ENCODE measurements at regions of chr14 and their contacts with region 1.

Region 1: DNA sequence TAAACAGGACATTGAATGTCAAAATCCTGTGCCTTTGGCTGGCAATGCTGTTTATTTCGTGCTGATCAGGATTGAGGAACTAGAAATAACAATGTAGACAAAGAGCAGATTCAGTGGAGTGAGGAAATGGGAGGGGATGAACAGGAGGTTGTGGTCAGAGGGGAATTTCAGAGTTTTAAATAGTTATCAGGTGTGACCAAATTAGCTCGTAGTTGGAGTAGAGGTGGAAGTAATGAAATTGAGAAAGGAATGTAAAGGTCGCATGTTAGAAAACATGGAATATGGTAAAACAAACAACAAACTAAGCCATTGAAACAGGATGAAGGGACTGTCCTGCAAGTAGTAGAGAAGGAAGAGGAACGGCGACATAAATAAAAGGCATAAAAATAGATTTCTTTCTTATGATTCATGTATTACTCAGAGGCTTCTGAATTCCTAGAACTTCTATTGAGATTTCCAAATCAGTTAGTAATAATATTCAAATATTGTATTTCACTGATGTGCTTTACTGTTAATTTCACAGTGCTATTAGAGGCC is 9.5 kb upstream of the SAV1 start:
- DNase-seq: peak in 1 of 9 experiments; percentile 17
- ATAC-seq: no peak
- H3K4me3 ChIP-seq: no peak overlapping the region
- H3K4me3 Mint-ChIP-seq: no peak overlapping the region
- H3K27ac ChIP-seq: no peak overlapping the region
- H3K27ac Mint-ChIP-seq: no peak overlapping the region
- H3K4me1 ChIP-seq: no peaks in the 10 kb centered on the region
- H3K4me1 Mint-ChIP-seq: peaks cover 4% of the 10 kb centered on the region
- H3K27me3 ChIP-seq: no peaks in the 10 kb centered on the region
- H3K27me3 Mint-ChIP-seq: no peaks in the 10 kb centered on the region
- CTCF ChIP-seq: no peak

Region 2: DNA sequence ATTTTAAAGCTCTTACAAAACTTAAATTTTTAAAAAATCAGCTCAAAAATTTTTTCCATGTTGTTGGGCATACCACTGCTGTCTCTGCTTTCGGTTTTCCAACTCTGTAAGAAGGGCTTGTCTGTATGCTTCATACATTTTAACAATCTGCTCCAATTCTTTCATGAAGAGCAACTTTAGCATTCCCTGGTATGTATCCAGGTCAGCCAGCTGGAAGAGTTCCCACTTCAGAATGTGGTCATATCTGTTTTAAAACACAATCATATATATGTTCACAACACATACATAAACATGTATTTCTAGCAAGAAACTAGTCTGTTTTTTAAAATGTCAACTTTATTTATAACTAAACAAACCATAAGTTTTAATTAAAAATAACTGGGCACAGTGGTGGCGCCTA is 42.5 kb before region 1 on chr14:
- CTCF ChIA-PET with region 1: no interaction called
- POLR2A ChIA-PET with region 1: no interaction called
- intact Hi-C with region 1: no loop called
- DNase-seq: no peak
- ATAC-seq: no peak
- H3K4me3 ChIP-seq: no peak overlapping the region
- H3K4me3 Mint-ChIP-seq: no peak overlapping the region
- H3K27ac ChIP-seq: no peak overlapping the region
- H3K27ac Mint-ChIP-seq: no peak overlapping the region
- H3K4me1 ChIP-seq: no peaks in the 10 kb centered on the region
- H3K4me1 Mint-ChIP-seq: no peaks in the 10 kb centered on the region
- H3K27me3 ChIP-seq: no peaks in the 10 kb centered on the region
- H3K27me3 Mint-ChIP-seq: no peaks in the 10 kb centered on the region
- CTCF ChIP-seq: no peak

Region 3: GRCh38 chr14:50657753-50658152 is 19.8 kb before region 1 on chr14:
- CTCF ChIA-PET with region 1: no interaction called
- POLR2A ChIA-PET with region 1: interaction called, 4 read pairs
- intact Hi-C with region 1: loop called in 1 of 2 experiments (anchors 2 kb)
- DNase-seq: no peak
- ATAC-seq: no peak
- H3K4me3 ChIP-seq: no peak overlapping the region
- H3K4me3 Mint-ChIP-seq: no peak overlapping the region
- H3K27ac ChIP-seq: no peak overlapping the region
- H3K27ac Mint-ChIP-seq: no peak overlapping the region
- H3K4me1 ChIP-seq: no peaks in the 10 kb centered on the region
- H3K4me1 Mint-ChIP-seq: no peaks in the 10 kb centered on the region
- H3K27me3 ChIP-seq: no peaks in the 10 kb centered on the region
- H3K27me3 Mint-ChIP-seq: no peaks in the 10 kb centered on the region
- CTCF ChIP-seq: no peak

Region 4: GRCh38 chr14:50688875-50689274 is 11.3 kb after region 1 on chr14:
- CTCF ChIA-PET with region 1: no interaction called
- POLR2A ChIA-PET with region 1: no interaction called
- intact Hi-C with region 1: no loop called
- DNase-seq: no peak
- ATAC-seq: no peak
- H3K4me3 ChIP-seq: no peak overlapping the region
- H3K4me3 Mint-ChIP-seq: no peak overlapping the region
- H3K27ac ChIP-seq: no peak overlapping the region
- H3K27ac Mint-ChIP-seq: no peak overlapping the region
- H3K4me1 ChIP-seq: no peaks in the 10 kb centered on the region
- H3K4me1 Mint-ChIP-seq: no peaks in the 10 kb centered on the region
- H3K27me3 ChIP-seq: no peaks in the 10 kb centered on the region
- H3K27me3 Mint-ChIP-seq: peaks cover 4% of the 10 kb centered on the region
- CTCF ChIP-seq: no peak

Region 5: GRCh38 chr14:51095854-51096823 is 418.5 kb after region 1 on chr14:
- CTCF ChIA-PET with region 1: no interaction called
- POLR2A ChIA-PET with region 1: no interaction called
- intact Hi-C with region 1: no loop called
- DNase-seq: peak in 4 of 9 experiments; percentile 5 to 36 (median 18)
- ATAC-seq: no peak
- H3K4me3 ChIP-seq: peak overlapping the region; percentile 72 to 81
- H3K4me3 Mint-ChIP-seq: peak overlapping the region; percentile 93
- H3K27ac ChIP-seq: peak overlapping the region in 1 of 2 experiments; percentile 52
- H3K27ac Mint-ChIP-seq: peak overlapping the region; percentile 80
- H3K4me1 ChIP-seq: peaks cover 17% of the 10 kb centered on the region
- H3K4me1 Mint-ChIP-seq: peaks cover 18% of the 10 kb centered on the region
- H3K27me3 ChIP-seq: peaks cover 0 to 10% of the 10 kb centered on the region in 2 experiments
- H3K27me3 Mint-ChIP-seq: peaks cover 5% of the 10 kb centered on the region
- CTCF ChIP-seq: no peak